Activated B cell treated with CpG ODN at 0.5 μM for 24 hours (primary cell): ENCODE measurements at regions of chr7 and their contacts with region 1.

Region 1: DNA sequence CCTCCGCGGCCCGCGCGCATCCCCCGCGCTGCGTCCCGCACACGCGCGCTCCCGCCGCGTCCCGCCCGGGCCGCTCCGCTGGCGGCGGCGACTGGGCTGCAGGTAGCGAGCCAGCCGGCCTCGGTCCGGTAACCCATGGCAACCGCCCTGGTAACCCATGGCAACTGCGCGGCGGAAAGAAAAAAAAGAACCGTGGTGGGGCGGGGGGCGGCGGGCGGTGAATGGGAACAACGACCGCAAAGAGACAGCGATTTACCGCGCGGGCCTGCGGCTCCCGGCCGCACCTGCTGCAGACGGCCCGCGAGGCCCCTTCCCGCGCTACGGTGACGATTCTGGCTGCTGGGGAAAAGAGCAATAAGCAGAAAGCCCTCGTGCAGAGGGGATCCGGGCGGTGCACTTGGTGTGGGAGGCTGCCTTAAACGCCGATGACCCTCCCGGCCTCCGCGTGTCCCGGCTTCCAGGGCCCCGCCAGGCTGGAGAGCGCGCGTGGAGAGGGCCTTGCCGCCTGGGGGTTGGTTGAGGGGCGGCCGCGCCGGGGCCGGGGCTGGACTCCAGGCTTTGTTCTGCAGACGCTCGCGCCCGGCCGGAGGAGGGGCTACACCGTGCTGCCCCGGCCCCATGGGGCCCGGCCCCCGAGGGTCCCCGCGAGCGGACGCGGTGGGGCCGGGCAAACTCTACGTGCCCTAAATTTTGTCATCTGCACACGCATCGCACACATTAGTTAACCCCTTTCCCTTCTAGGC is 84.7 kb downstream of the SNX10 start:
- DNase-seq: peak; percentile 47
- ATAC-seq: peak; percentile 46
- H3K4me3 Mint-ChIP-seq: peak overlapping the region; percentile 83
- H3K27ac Mint-ChIP-seq: no peak overlapping the region
- H3K4me1 Mint-ChIP-seq: peaks cover 4% of the 10 kb centered on the region
- H3K27me3 Mint-ChIP-seq: peaks cover 2% of the 10 kb centered on the region
- CTCF ChIP-seq: no peak

Region 2: GRCh38 chr7:26038201-26038990 is 337.9 kb before region 1 on chr7:
- CTCF ChIA-PET with region 1: no interaction called
- POLR2A ChIA-PET with region 1: no interaction called
- intact Hi-C with region 1: no loop called
- DNase-seq: no peak
- ATAC-seq: no peak
- H3K4me3 Mint-ChIP-seq: no peak overlapping the region
- H3K27ac Mint-ChIP-seq: no peak overlapping the region
- H3K4me1 Mint-ChIP-seq: no peaks in the 10 kb centered on the region
- H3K27me3 Mint-ChIP-seq: peaks cover 30% of the 10 kb centered on the region
- CTCF ChIP-seq: no peak

Region 3: DNA sequence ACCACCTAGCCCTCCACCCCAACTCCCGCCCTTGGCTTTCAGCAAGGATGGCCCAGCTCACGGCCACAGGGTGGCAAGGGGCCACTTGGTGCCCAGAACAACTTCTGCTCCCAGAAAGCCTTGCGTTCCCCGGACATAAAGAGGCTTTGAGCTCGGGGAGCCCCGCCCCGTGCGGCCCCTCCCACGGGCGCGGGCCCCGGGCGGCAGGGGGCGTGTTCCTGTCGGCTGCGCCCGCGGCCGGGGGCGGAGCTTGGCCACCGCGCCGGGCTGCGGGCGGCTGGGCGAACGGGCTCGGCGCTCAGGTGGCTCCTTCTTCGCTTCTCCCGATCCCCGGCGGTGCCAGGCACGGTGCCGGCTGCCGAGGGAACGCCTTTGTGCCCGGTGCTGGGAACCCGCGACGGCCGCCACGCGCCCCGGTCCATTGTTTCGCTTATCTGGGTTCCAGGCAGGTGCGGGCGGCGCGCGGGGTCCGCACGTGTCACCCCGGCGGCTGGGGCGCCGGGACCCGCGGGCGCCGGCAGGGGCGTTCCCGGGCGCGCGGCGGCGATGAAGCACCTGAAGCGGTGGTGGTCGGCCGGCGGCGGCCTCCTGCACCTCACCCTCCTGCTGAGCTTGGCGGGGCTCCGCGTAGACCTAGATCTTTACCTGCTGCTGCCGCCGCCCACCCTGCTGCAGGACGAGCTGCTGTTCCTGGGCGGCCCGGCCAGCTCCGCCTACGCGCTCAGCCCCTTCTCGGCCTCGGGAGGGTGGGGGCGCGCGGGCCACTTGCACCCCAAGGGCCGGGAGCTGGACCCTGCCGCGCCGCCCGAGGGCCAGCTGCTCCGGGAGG is 224.2 kb before region 1 on chr7 and contains the start of gene NFE2L3:
- CTCF ChIA-PET with region 1: no interaction called
- POLR2A ChIA-PET with region 1: no interaction called
- intact Hi-C with region 1: no loop called
- DNase-seq: peak; percentile 82
- ATAC-seq: peak; percentile 90
- H3K4me3 Mint-ChIP-seq: peak within 1 kb of the TSS; percentile 94
- H3K27ac Mint-ChIP-seq: peak within 1 kb of the TSS; percentile 86
- H3K4me1 Mint-ChIP-seq: peaks cover 48% of the 10 kb centered on the region
- H3K27me3 Mint-ChIP-seq: no peaks in the 10 kb centered on the region
- CTCF ChIP-seq: no peak
- total RNA-seq, gene NFE2L3: 2.7 and 3.0 TPM in 2 replicates

Region 4: DNA sequence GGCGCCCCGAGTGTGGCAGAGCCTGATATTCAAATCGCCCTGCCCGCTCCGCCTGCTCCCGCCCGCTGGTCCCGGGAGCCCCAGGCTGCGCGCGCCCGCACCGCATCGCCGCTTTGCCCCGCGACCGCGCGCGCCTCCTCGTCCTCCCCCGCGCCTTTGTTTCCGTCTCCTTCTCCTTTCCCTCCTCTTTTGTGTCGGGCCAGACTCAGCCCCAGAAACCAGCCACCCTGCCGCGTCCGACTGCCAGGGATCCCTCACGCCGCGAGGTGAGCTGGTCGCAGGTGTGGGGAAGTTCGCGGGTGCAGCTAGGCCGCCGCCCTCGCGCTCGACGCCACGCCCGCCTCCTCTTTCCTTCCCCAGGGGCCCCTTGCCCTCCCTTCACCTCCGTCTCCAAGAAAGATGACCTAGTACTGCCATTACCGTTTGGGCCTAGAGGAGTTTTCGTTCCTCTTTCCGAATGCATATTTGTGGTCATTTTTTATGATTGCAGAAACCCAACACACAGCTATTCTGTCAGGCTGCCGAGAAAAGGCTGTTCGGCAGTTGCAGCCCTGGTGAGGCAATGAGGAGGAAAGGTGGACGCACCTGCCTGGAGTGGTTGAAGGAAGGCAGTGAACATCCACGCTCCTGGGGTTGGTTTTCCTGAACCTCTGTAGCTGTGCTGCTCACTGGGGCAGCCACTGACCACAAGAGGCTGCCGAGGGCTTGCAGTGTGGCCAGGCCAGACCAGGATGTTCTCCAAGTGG is 22.6 kb after region 1 on chr7:
- CTCF ChIA-PET with region 1: interaction called, 8 read pairs
- POLR2A ChIA-PET with region 1: interaction called, 13 read pairs
- intact Hi-C with region 1: loop called (anchors 1 kb)
- DNase-seq: peak; percentile 83
- ATAC-seq: peak; percentile 89
- H3K4me3 Mint-ChIP-seq: peak overlapping the region; percentile 98
- H3K27ac Mint-ChIP-seq: peak overlapping the region; percentile 98
- H3K4me1 Mint-ChIP-seq: peaks cover 36% of the 10 kb centered on the region
- H3K27me3 Mint-ChIP-seq: no peaks in the 10 kb centered on the region
- CTCF ChIP-seq: no peak

Region 5: GRCh38 chr7:26667500-26668133 is 291.3 kb after region 1 on chr7:
- CTCF ChIA-PET with region 1: interaction called, 10 read pairs
- POLR2A ChIA-PET with region 1: no interaction called
- intact Hi-C with region 1: loop called (anchors 1 kb)
- DNase-seq: no peak
- ATAC-seq: peak; percentile 60
- H3K4me3 Mint-ChIP-seq: no peak overlapping the region
- H3K27ac Mint-ChIP-seq: no peak overlapping the region
- H3K4me1 Mint-ChIP-seq: peaks cover 18% of the 10 kb centered on the region
- H3K27me3 Mint-ChIP-seq: no peaks in the 10 kb centered on the region
- CTCF ChIP-seq: no peak

Region 6: DNA sequence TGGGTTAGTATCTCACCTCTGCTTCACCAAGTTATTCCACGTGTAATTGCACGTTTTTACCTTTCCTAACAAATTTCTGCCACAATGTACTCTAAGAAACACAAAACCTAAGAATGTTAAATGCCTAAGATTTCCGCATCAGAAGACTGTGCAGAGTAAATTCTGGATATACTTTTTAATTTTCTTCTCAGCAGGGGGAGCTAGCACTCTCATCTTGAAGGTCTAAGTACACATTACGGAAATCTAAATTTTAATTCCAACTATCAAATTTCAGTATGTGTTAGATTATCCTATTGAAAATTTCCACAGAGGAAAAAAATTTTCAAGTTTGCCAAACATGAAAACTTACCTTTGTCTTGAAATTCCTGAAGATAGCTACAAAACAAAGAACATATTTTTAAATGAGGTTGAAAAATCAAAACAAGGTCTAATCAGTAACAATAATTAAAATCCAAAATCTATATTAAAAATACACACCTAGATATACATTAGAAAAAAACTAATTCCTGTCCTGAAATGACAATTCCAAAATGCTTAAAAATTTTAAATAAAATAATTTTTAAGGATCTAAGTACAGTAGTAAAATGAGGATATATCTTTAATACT is 477.5 kb after region 1 on chr7:
- CTCF ChIA-PET with region 1: no interaction called
- POLR2A ChIA-PET with region 1: no interaction called
- intact Hi-C with region 1: loop called (anchors 5 kb)
- DNase-seq: no peak
- ATAC-seq: no peak
- H3K4me3 Mint-ChIP-seq: no peak overlapping the region
- H3K27ac Mint-ChIP-seq: no peak overlapping the region
- H3K4me1 Mint-ChIP-seq: peaks cover 30% of the 10 kb centered on the region
- H3K27me3 Mint-ChIP-seq: no peaks in the 10 kb centered on the region
- CTCF ChIP-seq: no peak